Tibial artery (tissue), 4 donors: ENCODE measurements at regions of chr21 and their contacts with region 1.

Region 1: GRCh38 chr21:42973991-42974831 is at the start of gene PKNOX1:
- DNase-seq: peak; percentile 99
- H3K4me3 ChIP-seq: peak within 1 kb of the TSS; percentile 80 to 81
- H3K27ac ChIP-seq: peak within 1 kb of the TSS; percentile 96 to 97
- H3K4me1 ChIP-seq: peaks cover 0 to 20% (median 6%) of the 10 kb centered on the region in 4 donors
- H3K27me3 ChIP-seq: no peaks in the 10 kb centered on the region
- CTCF ChIP-seq: no peak

Region 2: DNA sequence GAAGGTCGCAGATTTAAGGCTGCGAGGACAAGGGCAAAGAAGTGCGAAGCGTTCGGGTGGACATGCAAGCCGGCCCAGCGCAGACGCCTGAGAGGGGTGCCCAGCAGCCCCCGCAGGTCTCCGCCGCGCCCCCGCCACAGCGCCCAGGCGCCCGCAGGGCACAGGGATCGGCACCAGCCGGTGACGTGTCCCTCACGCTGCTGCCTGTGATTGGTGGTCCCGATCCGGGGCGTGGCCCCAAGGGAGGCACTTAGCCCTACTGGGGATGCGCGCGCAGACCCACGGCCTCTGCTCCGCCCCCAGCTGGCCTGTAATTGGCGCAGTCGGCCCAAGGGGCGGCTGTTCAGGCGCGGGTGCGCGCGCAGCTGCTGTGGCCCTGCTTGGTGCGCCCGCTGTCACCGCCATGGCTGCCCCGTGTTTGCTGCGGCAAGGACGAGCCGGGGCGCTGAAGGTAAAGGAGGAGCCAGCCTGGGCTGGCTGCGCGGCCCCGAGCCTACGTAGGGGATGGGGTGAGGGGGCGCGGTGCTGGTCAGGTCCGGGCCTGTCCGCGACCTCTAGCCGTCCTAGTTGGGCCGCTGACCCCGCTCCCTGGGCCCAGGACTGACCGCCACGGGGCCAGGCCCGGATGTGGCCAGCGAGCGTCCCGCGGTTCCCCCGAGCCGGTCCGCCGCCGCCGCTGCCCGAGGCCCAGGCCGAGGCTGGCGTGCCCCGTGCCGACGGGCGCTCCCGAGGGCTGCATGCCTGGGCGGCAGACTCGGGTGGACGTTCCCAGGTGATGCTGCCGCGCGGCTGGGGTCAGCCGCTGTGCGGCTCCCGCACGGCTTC is 81.1 kb before region 1 on chr21 and contains the start of gene NDUFV3:
- intact Hi-C with region 1: loop called (anchors 10 kb)
- DNase-seq: peak; percentile 100
- H3K4me3 ChIP-seq: peak within 1 kb of the TSS; percentile 85 to 94
- H3K27ac ChIP-seq: peak within 1 kb of the TSS; percentile 93 to 96
- H3K4me1 ChIP-seq: peaks cover 0 to 17% (median 5%) of the 10 kb centered on the region in 4 donors
- H3K27me3 ChIP-seq: no peaks in the 10 kb centered on the region
- CTCF ChIP-seq: no peak

Region 3: DNA sequence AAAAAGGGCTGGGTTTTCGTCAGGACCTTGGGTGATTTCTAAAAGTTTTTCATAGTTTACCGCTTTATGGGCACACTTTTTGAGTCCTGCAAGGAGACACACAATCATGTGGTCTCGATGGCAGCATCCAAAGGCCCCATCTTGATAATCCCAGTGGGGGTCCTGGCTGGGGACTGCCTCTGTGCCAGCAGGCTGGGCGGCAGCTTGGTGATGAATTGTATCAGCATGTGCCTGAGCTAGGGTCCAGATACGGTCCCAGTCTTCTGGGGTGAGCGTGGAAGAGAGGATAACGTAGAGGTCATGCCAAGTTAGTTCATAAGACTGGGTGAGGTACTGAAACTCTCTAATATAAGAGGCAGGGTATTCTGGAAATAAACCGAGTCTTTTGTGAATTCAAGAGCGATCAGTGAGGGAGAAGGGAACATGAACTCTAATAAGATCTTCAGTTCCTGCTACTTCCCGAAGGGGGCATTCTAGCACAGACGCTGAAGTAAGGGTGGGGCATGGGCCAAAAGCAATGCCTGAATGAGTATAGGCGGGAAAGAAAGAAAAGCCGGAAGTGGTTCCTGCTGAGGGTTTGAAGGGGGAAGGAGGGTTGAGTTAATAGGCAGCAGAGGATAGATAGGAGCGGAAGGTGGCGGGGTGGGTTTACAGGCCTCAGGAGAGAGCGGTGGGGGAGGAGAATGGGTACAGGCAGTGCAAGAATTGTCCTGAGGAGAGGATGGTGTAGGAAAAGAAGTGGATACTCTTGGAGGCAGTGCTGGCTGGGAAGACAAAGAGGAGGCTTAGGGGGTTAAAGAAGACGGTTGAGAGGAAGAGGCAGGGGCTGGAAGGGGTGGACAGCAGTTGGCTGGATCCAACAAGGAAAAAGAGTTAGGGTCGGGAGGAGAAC is 50.4 kb before region 1 on chr21:
- intact Hi-C with region 1: loop called (anchors 10 kb)
- DNase-seq: peak; percentile 79 to 85
- H3K4me3 ChIP-seq: no peak overlapping the region
- H3K27ac ChIP-seq: no peak overlapping the region
- H3K4me1 ChIP-seq: peaks cover 0 to 10% (median 3%) of the 10 kb centered on the region in 4 donors
- H3K27me3 ChIP-seq: no peaks in the 10 kb centered on the region
- CTCF ChIP-seq: peak; percentile 81 to 84

Region 4: DNA sequence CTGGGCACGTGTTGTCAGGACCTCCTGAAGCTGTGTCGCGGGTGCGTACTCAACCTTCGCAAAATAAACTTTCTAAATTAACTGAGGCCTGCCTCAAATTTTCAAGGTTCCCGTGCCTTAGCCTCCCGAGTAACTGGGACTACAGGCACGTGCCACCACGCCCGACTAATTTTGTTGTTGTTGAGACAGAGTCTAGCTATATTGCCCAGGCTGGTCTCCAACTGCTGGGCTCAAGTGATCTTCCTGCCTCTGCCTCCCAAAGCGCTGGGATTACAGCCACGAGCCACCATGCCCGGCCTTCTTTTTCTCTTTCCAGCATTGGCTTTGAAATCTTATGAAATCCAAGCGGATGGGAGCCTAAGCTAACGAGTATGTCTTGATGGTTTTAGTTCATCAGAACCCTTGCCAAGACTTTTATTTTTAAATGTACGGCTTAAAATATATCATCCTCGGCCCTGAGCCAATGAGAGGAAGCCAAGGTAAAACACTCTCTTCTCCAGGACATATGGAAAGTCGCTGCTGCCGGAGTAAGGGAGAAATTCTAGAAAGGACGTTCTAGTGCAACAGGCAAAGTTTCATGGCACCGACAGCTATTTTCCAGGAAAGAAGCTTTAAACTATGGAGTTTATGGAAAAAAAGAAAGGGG is 36.1 kb before region 1 on chr21:
- intact Hi-C with region 1: no loop called
- DNase-seq: no peak
- H3K4me3 ChIP-seq: no peak overlapping the region
- H3K27ac ChIP-seq: no peak overlapping the region
- H3K4me1 ChIP-seq: peaks cover 0 to 12% (median 9%) of the 10 kb centered on the region in 4 donors
- H3K27me3 ChIP-seq: no peaks in the 10 kb centered on the region
- CTCF ChIP-seq: no peak